Activated CD4-positive, alpha-beta T cell treated with anti-CD3 and anti-CD28 coated beads for 36 hours (primary cell): ENCODE measurements at regions of chr16 and their contacts with region 1.

Region 1: DNA sequence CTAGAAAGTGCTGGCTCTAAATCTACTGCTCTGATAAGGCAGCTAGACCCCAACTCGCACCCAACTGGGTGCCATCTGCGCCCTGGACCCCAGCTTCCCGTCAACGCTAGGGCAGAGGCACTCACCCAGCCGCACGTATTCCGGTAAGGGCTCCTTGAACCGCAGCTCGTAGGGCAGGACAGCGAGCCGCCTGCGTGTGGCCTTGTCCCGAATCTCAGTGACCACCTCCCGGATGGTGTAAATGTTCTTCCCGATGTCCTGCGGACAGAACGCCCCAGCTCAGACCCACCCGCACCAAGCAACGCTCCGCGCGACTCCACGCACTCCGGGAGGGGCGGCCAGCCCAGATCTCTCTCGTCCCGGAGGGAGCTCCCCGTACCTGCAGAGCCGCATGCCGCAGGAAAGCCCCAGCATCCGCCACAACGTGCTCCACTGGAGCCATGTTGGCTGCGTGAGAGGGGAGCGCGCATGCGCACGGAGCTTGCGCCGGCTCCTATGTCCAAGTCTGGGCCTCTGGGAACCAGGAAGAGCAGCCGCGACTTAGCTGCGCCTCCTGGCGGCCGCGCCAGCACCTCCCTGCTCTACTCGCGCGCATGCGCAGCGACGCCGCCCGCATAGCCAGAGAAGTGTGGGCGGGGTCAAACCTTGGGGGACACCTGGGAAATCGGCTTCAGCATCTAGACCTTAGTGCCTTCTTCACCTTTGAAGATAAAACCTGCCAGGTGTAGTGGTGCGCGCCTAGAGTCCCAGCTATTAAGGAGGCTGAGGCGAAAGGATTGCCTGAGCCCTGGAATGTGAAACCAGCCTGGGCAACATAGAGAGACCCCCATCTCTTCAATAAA is at the start of gene NOB1:
- DNase-seq: peak; percentile 99
- ATAC-seq: peak; percentile 98
- H3K4me3 Mint-ChIP-seq: peak within 1 kb of the TSS; percentile 96
- H3K27ac Mint-ChIP-seq: peak within 1 kb of the TSS; percentile 98
- H3K4me1 Mint-ChIP-seq: peaks cover 21% of the 10 kb centered on the region
- H3K27me3 Mint-ChIP-seq: no peaks in the 10 kb centered on the region
- total RNA-seq, gene NOB1: 109 to 112 TPM

Region 2: GRCh38 chr16:69396187-69397061 is 358.3 kb before region 1 on chr16:
- CTCF ChIA-PET with region 1: interaction called, 19 read pairs
- POLR2A ChIA-PET with region 1: interaction called, 3 read pairs
- intact Hi-C with region 1: loop called (anchors 1 to 2 kb)
- DNase-seq: peak; percentile 83
- ATAC-seq: peak; percentile 63
- H3K4me3 Mint-ChIP-seq: no peak overlapping the region
- H3K27ac Mint-ChIP-seq: peak overlapping the region; percentile 70
- H3K4me1 Mint-ChIP-seq: peaks cover 20% of the 10 kb centered on the region
- H3K27me3 Mint-ChIP-seq: no peaks in the 10 kb centered on the region

Region 3: DNA sequence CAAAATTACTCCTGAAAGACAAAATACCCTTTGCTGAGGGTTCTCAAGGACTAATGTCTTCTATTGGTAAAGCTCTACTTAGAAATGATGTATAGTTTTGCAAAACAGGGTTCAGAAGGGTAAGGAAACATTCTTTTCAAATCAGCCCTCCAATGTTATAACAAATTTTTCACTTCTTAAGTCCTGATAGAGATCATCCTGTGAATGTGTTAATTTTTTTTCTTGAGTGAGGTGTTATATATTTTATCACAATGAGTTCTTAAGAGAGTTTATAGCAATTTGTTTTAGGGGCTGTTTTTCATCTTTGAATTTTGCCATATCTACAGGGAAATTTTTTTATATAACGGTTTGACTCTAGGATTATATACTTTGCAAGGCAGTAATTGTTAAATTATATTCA is 300.8 kb before region 1 on chr16:
- CTCF ChIA-PET with region 1: no interaction called
- POLR2A ChIA-PET with region 1: interaction called, 12 read pairs
- intact Hi-C with region 1: no loop called
- DNase-seq: no peak
- ATAC-seq: no peak
- H3K4me3 Mint-ChIP-seq: no peak overlapping the region
- H3K27ac Mint-ChIP-seq: no peak overlapping the region
- H3K4me1 Mint-ChIP-seq: peaks cover 3% of the 10 kb centered on the region
- H3K27me3 Mint-ChIP-seq: no peaks in the 10 kb centered on the region

Region 4: DNA sequence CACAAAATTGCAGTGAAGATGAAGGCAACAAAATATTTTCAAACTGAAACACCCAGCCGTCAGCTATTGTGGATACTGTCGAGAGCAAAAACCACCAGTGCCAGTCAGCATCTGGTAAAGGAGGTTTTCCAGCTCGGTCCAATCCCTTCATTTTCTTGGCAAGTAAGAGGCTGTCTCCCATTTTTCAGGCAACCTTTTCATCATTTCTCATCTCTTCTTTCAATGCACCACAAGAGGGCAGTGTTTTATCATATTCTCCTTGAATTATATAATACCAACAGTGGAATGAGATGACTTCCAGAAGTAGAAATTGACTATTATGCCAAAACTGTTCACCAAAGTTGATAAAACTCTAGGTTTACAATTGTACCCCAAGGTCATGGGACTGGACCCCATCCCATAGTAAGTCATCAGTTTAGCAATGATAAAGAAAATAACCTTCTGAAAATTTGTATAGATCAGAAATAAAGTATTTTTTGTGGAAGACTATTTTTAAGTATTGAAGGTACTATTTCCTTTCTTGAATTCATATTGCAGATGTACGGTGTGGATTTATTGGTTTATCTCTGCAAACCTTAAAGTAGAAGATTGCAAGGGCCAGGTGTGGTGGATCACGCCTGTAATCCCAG is 45.1 kb before region 1 on chr16:
- CTCF ChIA-PET with region 1: interaction called, 40 read pairs
- POLR2A ChIA-PET with region 1: no interaction called
- intact Hi-C with region 1: loop called (anchors 1 kb)
- DNase-seq: no peak
- ATAC-seq: peak; percentile 40
- H3K4me3 Mint-ChIP-seq: no peak overlapping the region
- H3K27ac Mint-ChIP-seq: no peak overlapping the region
- H3K4me1 Mint-ChIP-seq: peaks cover 9% of the 10 kb centered on the region
- H3K27me3 Mint-ChIP-seq: no peaks in the 10 kb centered on the region

Region 5: DNA sequence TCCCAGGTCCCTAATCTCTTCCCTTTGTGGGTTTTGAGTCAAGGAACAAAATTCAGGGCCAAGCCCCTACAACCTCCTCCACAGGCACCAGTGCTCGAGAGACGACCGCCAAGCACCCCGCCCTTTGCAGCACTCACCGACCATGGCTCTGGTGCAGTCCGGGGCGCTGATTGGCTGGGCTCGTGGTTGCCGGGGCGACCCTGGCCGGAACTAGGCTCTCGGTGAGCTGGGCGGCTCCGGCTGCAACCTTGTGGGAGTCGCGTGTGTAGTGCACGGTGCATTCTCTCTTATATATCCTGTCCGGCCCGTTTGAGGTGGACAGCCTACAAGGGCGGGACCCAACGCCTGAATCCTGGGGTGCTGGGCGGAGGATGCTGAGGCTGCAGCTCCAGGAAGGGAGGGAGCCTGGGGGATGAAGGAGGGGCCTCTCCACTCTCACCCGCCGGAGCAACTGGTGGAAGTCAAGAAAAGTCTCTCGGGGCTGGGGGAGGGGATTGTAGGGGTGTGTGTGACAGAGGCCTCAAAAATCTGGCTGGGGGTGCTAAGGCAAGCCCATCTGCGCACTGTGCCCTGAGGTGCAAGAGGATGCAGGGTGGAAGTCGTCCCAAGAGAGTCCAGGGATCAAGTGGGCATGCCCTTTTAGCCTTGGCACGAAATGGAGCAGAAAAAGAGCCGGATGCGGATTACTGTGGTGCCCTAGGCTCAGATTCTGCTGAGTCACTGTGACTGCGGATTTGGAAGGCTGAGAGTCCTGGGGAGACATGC is 28.2 kb before region 1 on chr16 and contains the start of gene NQO1:
- CTCF ChIA-PET with region 1: interaction called, 22 read pairs
- POLR2A ChIA-PET with region 1: interaction called, 5 read pairs
- intact Hi-C with region 1: loop called (anchors 1 kb)
- DNase-seq: peak; percentile 95
- ATAC-seq: peak; percentile 99
- H3K4me3 Mint-ChIP-seq: peak within 1 kb of the TSS; percentile 79
- H3K27ac Mint-ChIP-seq: peak within 1 kb of the TSS; percentile 89
- H3K4me1 Mint-ChIP-seq: peaks cover 24% of the 10 kb centered on the region
- H3K27me3 Mint-ChIP-seq: no peaks in the 10 kb centered on the region
- total RNA-seq, gene NQO1: 9.9 to 11.4 TPM

Region 6: GRCh38 chr16:69773260-69773947 is 18.7 kb after region 1 on chr16:
- CTCF ChIA-PET with region 1: interaction called, 15 read pairs
- POLR2A ChIA-PET with region 1: no interaction called
- intact Hi-C with region 1: no loop called
- DNase-seq: no peak
- ATAC-seq: no peak
- H3K4me3 Mint-ChIP-seq: no peak overlapping the region
- H3K27ac Mint-ChIP-seq: peak overlapping the region; percentile 34
- H3K4me1 Mint-ChIP-seq: peaks cover 42% of the 10 kb centered on the region
- H3K27me3 Mint-ChIP-seq: no peaks in the 10 kb centered on the region

Region 7: DNA sequence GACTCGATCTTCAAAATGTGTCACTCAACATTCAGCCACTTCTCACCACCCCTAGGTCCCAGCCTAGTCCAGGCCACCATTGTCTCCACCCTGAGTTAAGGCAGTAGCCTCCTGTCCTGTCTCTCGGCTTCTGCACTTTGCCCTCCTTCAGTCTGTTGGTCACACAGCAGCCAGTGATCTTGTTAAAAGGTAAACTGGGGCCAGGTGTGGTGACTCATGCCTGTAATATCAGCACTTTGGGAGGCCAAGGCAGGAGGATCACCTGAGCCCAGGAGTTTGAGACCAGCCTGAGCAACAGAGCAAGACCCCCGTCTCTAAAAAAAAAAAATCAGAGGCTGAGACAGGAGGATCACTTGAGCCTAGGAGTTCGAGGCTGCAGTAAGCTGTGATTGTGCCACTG is 33.2 kb after region 1 on chr16:
- CTCF ChIA-PET with region 1: no interaction called
- POLR2A ChIA-PET with region 1: no interaction called
- intact Hi-C with region 1: no loop called
- DNase-seq: no peak
- ATAC-seq: no peak
- H3K4me3 Mint-ChIP-seq: no peak overlapping the region
- H3K27ac Mint-ChIP-seq: peak overlapping the region; percentile 37
- H3K4me1 Mint-ChIP-seq: no peaks in the 10 kb centered on the region
- H3K27me3 Mint-ChIP-seq: no peaks in the 10 kb centered on the region